ENCODE measurements at regions of chr17 and their contacts with region 1.

Region 1: GRCh38 chr17:44899069-44899782 is at the start of gene EFTUD2:
- DNase-seq: peak; percentile 97
- H3K4me3 Mint-ChIP-seq: peak within 1 kb of the TSS; percentile 84
- H3K27ac Mint-ChIP-seq: peak within 1 kb of the TSS; percentile 99
- H3K4me1 Mint-ChIP-seq: peaks cover 19% of the 10 kb centered on the region
- H3K27me3 Mint-ChIP-seq: no peaks in the 10 kb centered on the region
- CTCF ChIP-seq: no peak
- total RNA-seq, gene EFTUD2: 197 and 202 TPM in 2 replicates

Region 2: GRCh38 chr17:44911133-44912001 is 12.1 kb after region 1 on chr17:
- CTCF ChIA-PET with region 1: interaction called, 17 read pairs
- intact Hi-C with region 1: no loop called
- DNase-seq: peak; percentile 86
- H3K4me3 Mint-ChIP-seq: peak overlapping the region; percentile 54
- H3K27ac Mint-ChIP-seq: no peak overlapping the region
- H3K4me1 Mint-ChIP-seq: peaks cover 22% of the 10 kb centered on the region
- H3K27me3 Mint-ChIP-seq: peaks cover 44% of the 10 kb centered on the region
- CTCF ChIP-seq: peak; percentile 86

Region 3: DNA sequence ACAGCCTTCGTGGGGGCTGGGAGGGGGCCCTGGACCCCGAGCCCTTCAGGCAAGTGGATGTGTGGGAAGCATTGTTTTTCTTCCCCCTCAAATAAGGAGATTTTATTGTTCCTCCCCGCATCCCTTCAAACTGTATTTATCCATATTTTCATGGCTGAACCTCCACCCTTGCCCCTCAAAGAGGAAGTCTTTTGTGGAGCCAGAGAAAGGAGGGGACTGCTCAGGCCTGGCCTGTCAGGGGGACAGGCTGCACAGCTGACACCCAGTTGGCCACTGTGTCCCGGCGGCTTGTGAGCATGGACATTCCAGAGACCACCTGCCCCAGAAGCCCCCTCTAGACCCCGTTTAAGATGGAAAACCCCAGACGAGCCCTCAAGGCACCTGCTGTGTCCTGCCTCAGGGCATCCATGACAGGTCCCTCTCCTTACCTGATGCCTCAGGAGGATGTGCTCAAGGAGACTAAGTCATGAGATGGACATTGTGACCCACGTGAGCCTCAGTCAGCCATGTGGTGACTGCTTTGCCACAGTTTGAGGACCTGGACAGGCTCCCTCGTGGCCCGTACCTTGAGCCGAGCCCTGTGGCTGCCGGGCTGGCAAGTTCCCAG is 278.4 kb after region 1 on chr17:
- CTCF ChIA-PET with region 1: no interaction called
- intact Hi-C with region 1: no loop called
- DNase-seq: no peak
- H3K4me3 Mint-ChIP-seq: no peak overlapping the region
- H3K27ac Mint-ChIP-seq: no peak overlapping the region
- H3K4me1 Mint-ChIP-seq: peaks cover 21% of the 10 kb centered on the region
- H3K27me3 Mint-ChIP-seq: no peaks in the 10 kb centered on the region
- CTCF ChIP-seq: no peak